Activated B cell treated with CpG ODN at 0.5 μM for 24 hours (primary cell): ENCODE measurements at regions of chr14 and their contacts with region 1.

Region 1: DNA sequence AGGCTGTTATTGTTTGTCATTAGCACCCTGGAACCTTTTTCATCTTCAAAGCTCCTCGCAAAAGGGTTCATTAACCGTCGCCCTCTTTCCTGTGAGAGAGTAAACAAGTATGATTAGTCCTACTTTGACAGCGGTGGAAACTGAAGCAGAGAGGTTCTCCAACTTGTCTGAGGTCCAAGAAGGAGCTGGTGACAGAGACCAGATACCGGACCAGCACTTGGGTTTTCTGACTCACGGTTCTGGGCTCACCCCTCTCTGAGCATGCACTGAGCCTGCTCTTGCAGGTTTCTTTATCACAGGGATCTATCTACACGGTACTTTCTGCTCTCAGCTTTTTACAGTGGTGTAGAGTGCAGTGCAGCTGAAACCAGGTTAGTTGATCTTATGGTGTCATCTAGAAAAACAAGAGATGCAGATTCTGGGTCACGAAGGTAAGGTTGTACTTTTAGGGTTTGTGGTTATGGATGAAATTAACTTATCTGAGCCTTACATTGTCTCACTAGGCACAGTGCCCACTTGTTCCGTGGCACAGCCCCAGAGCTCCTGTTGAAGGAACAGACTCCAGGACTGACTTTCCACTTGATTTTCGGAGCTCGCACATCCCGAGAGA is 62.1 kb downstream of the PPP2R5C start:
- DNase-seq: no peak
- ATAC-seq: peak; percentile 31
- H3K4me3 Mint-ChIP-seq: peak overlapping the region; percentile 80
- H3K27ac Mint-ChIP-seq: peak overlapping the region; percentile 99
- H3K4me1 Mint-ChIP-seq: peaks cover 91% of the 10 kb centered on the region
- H3K27me3 Mint-ChIP-seq: no peaks in the 10 kb centered on the region
- CTCF ChIP-seq: no peak

Region 2: DNA sequence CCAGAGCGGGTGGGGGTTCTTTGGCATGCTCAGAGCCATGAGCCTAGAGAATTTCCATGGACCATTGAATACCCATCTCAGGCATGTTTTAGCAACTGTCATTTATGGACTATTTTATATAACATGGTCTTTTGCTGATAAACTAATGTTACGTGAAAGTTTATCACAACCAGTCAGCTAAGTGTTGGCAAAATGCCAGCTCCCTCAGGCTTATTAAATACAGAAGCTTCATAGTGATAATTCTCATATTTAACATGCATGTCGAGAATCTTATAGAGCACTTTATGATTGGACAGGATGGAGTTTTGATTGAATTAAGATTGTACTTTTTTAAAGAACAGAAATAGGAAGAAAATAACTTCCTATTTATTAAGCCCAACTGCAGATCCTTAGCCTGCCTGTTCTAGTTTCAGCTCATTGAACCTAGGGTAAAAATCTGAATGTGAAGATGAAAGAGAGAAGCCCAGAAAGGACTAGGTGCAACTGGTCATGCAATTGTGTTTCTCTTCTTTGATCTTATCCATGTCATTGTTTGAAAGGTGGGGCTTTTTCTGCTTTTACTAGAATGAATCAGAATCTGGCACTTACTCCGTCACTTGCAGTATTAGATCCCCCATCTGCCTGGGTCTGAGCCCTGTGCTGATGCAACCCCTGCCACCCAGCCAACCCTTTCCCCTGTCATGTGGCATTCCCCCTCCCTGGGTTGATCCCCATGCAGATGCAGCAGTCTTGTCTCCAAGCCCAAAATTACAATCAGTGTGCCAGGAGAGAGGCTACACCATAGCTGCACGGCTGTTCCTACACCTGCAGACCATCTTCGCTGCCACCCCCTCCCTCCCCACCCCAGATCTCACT is 1893.0 kb before region 1 on chr14:
- CTCF ChIA-PET with region 1: no interaction called
- POLR2A ChIA-PET with region 1: no interaction called
- intact Hi-C with region 1: no loop called
- DNase-seq: no peak
- ATAC-seq: no peak
- H3K4me3 Mint-ChIP-seq: no peak overlapping the region
- H3K27ac Mint-ChIP-seq: no peak overlapping the region
- H3K4me1 Mint-ChIP-seq: no peaks in the 10 kb centered on the region
- H3K27me3 Mint-ChIP-seq: peaks cover 20% of the 10 kb centered on the region
- CTCF ChIP-seq: no peak

Region 3: DNA sequence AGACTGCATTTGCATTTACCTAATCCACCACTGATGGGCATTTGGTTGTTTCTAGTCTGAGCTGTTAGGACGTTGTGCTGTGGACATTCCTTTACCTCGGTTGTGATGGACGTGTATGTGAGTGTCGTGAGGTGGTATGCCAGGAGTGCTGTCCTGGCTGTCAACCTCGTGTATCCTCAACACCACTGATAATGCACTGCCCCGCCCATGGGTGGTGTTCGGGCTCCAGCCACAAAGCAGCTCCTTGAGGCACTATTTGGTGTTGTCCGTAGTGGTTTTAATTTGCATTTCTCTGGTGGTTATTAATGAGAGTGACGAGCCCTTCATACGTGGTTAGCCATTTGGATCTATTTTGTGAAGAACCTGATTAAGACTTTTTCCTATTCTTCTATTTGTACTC is 25.5 kb after region 1 on chr14:
- CTCF ChIA-PET with region 1: interaction called, 11 read pairs
- POLR2A ChIA-PET with region 1: interaction called, 64 read pairs
- intact Hi-C with region 1: no loop called
- DNase-seq: no peak
- ATAC-seq: peak; percentile 67
- H3K4me3 Mint-ChIP-seq: peak overlapping the region; percentile 60
- H3K27ac Mint-ChIP-seq: peak overlapping the region; percentile 38
- H3K4me1 Mint-ChIP-seq: peaks cover 88% of the 10 kb centered on the region
- H3K27me3 Mint-ChIP-seq: no peaks in the 10 kb centered on the region
- CTCF ChIP-seq: no peak

Region 4: DNA sequence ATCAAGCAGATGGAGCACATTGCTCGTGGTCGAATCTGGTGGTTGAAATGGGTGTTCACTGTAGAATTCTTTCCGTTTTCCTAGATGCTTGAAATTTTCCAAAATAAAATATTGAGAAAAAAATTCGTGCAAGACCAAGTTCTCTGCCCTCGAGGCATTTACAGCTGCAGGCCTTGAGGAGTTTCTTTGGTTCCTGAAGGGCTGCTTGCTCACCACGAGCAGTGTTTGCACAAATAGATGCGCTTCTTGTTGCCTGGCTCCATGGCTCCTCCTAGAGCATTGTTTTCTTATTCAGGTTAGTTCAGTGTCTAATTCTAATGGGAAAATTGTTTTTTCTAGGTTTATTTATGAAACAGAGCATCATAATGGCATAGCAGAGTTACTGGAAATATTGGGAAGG is 66.3 kb after region 1 on chr14:
- CTCF ChIA-PET with region 1: no interaction called
- POLR2A ChIA-PET with region 1: no interaction called
- intact Hi-C with region 1: no loop called
- DNase-seq: no peak
- ATAC-seq: no peak
- H3K4me3 Mint-ChIP-seq: no peak overlapping the region
- H3K27ac Mint-ChIP-seq: peak overlapping the region; percentile 35
- H3K4me1 Mint-ChIP-seq: no peaks in the 10 kb centered on the region
- H3K27me3 Mint-ChIP-seq: no peaks in the 10 kb centered on the region
- CTCF ChIP-seq: no peak

Region 5: GRCh38 chr14:101947906-101948665 is 124.5 kb after region 1 on chr14:
- CTCF ChIA-PET with region 1: no interaction called
- POLR2A ChIA-PET with region 1: interaction called, 10 read pairs
- intact Hi-C with region 1: loop called (anchors 1 kb)
- DNase-seq: peak; percentile 98
- ATAC-seq: peak; percentile 95
- H3K4me3 Mint-ChIP-seq: peak overlapping the region; percentile 93
- H3K27ac Mint-ChIP-seq: peak overlapping the region; percentile 97
- H3K4me1 Mint-ChIP-seq: peaks cover 19% of the 10 kb centered on the region
- H3K27me3 Mint-ChIP-seq: peaks cover 22% of the 10 kb centered on the region
- CTCF ChIP-seq: no peak

Region 6: GRCh38 chr14:102738756-102739494 is 915.3 kb after region 1 on chr14:
- CTCF ChIA-PET with region 1: no interaction called
- POLR2A ChIA-PET with region 1: no interaction called
- intact Hi-C with region 1: no loop called
- DNase-seq: no peak
- ATAC-seq: no peak
- H3K4me3 Mint-ChIP-seq: no peak overlapping the region
- H3K27ac Mint-ChIP-seq: no peak overlapping the region
- H3K4me1 Mint-ChIP-seq: no peaks in the 10 kb centered on the region
- H3K27me3 Mint-ChIP-seq: no peaks in the 10 kb centered on the region
- CTCF ChIP-seq: no peak